ENCODE measurements at regions of chr11 and their contacts with region 1.

Region 1: GRCh38 chr11:58629857-58630256 is 7.4 kb downstream of the CNTF start:
- DNase-seq: no peak
- H3K4me3 ChIP-seq: no peak overlapping the region
- H3K27ac ChIP-seq: no peak overlapping the region
- H3K4me1 ChIP-seq: peaks cover 0 to 4% (median 1%) of the 10 kb centered on the region in 4 experiments; a peak in 2 of 7 replicates
- H3K27me3 ChIP-seq: no peaks in the 10 kb centered on the region
- CTCF ChIP-seq: peak in 2 of 3 experiments; percentile 69 to 75; a peak in 3 of 4 replicates
- EP300 ChIP-seq: no peak
- POLR2A ChIP-seq: peak in 1 of 2 experiments; percentile 31; a peak in 1 of 3 replicates
- RAD21 ChIP-seq: peak; percentile 55 to 65

Region 2: DNA sequence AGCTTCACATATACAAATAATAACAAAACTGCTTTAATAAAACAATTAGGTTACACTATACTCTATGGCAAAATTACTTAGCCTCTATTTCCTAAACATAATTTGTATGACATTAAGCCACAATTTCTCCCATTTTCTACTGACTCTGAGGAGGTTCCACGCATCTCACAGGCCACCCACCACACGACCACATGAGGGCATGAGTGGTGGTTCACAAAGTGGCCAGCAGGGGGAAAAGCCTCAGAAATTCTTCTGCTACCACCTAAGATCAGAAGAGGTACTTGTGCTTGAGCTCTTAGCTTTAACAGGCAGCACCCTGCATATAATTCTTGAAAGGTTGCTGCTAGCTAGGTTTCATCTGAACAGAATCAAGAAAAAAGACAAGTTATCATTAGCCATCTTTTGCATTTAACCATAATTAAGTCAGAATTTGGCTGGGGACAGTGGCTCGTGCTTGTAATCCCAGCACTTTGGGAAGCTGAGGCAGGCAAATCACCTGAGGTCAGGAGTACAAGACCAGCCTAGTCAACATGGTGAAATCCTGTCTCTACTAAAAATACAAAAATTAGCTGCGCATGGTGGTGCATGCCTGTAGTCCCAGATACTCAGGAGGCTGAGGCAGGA is 61.9 kb before region 1 on chr11:
- CTCF ChIA-PET with region 1: interaction called, 21 read pairs
- POLR2A ChIA-PET with region 1: no interaction called
- DNase-seq: peak; percentile 29 to 80
- H3K4me3 ChIP-seq: no peak overlapping the region
- H3K27ac ChIP-seq: no peak overlapping the region
- H3K4me1 ChIP-seq: no peaks in the 10 kb centered on the region
- H3K27me3 ChIP-seq: no peaks in the 10 kb centered on the region
- CTCF ChIP-seq: peak; percentile 74 to 92 (median 84)
- EP300 ChIP-seq: no peak
- POLR2A ChIP-seq: no peak
- RAD21 ChIP-seq: peak; percentile 41 to 52

Region 3: GRCh38 chr11:58606930-58607714 is 22.7 kb before region 1 on chr11:
- CTCF ChIA-PET with region 1: interaction called, 10 read pairs
- POLR2A ChIA-PET with region 1: interaction called, 4 read pairs
- DNase-seq: no peak
- H3K4me3 ChIP-seq: no peak overlapping the region
- H3K27ac ChIP-seq: no peak overlapping the region
- H3K4me1 ChIP-seq: peaks cover 0 to 3% (median 0%) of the 10 kb centered on the region in 4 experiments; a peak in 1 of 7 replicates
- H3K27me3 ChIP-seq: no peaks in the 10 kb centered on the region
- CTCF ChIP-seq: no peak
- EP300 ChIP-seq: no peak
- POLR2A ChIP-seq: no peak
- RAD21 ChIP-seq: no peak

Region 4: GRCh38 chr11:58616594-58616993 is 13.3 kb before region 1 on chr11:
- CTCF ChIA-PET with region 1: interaction called, 10 read pairs
- POLR2A ChIA-PET with region 1: interaction called, 4 read pairs
- DNase-seq: no peak
- H3K4me3 ChIP-seq: no peak overlapping the region
- H3K27ac ChIP-seq: no peak overlapping the region
- H3K4me1 ChIP-seq: no peaks in the 10 kb centered on the region
- H3K27me3 ChIP-seq: no peaks in the 10 kb centered on the region
- CTCF ChIP-seq: no peak
- EP300 ChIP-seq: no peak
- POLR2A ChIP-seq: no peak
- RAD21 ChIP-seq: no peak

Region 5: GRCh38 chr11:58640386-58641023 is 10.6 kb after region 1 on chr11:
- CTCF ChIA-PET with region 1: interaction called, 37 read pairs
- POLR2A ChIA-PET with region 1: interaction called, 7 read pairs
- DNase-seq: no peak
- H3K4me3 ChIP-seq: no peak overlapping the region
- H3K27ac ChIP-seq: no peak overlapping the region
- H3K4me1 ChIP-seq: no peaks in the 10 kb centered on the region
- H3K27me3 ChIP-seq: no peaks in the 10 kb centered on the region; a peak in 1 of 7 replicates
- CTCF ChIP-seq: no peak
- EP300 ChIP-seq: no peak
- POLR2A ChIP-seq: no peak
- RAD21 ChIP-seq: no peak

Region 6: GRCh38 chr11:58900479-58901420 is 270.9 kb after region 1 on chr11:
- CTCF ChIA-PET with region 1: interaction called, 20 read pairs
- POLR2A ChIA-PET with region 1: no interaction called
- DNase-seq: peak; percentile 95 to 98
- H3K4me3 ChIP-seq: peak overlapping the region; percentile 38 to 59 (median 46); a peak in 6 of 8 replicates
- H3K27ac ChIP-seq: no peak overlapping the region
- H3K4me1 ChIP-seq: peaks cover 0 to 6% (median 2%) of the 10 kb centered on the region in 4 experiments; a peak in 3 of 7 replicates
- H3K27me3 ChIP-seq: no peaks in the 10 kb centered on the region; a peak in 3 of 7 replicates
- CTCF ChIP-seq: peak; percentile 74 to 86 (median 77)
- EP300 ChIP-seq: no peak; a peak in 1 of 3 replicates
- POLR2A ChIP-seq: no peak
- RAD21 ChIP-seq: peak; percentile 82

Measured in H1 (cell line).